ENCODE measurements at regions of chr20 and their contacts with region 1.

Region 1: DNA sequence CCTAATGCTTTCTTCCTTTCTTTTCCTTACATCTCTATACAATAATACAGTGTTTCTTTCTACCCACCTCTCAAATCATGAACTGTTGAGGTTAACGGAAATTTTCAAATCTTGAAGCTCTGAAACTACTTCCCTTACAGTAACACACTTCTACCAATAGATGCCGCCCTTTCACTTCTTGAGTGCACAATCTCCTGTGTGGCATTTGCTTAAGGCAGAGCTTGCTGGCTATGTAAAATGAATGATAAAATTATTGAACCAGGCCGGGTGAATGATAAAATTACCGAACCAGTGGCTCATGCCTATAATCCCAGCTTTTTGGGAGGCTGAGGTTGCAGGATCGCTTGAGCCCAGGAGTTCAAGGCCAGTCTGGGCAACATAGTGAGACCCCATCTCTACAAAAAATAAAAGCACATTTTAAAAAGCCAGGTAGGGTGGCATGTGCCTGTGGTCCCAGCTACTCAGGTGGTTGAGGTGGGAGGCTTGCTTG is 56.8 kb downstream of the KCNS1 start:
- DNase-seq: peak; percentile 40
- CTCF ChIP-seq: peak; percentile 61

Region 2: GRCh38 chr20:44552950-44553908 is 490.9 kb before region 1 on chr20:
- CTCF ChIA-PET with region 1: no interaction called
- POLR2A ChIA-PET with region 1: no interaction called
- DNase-seq: no peak
- CTCF ChIP-seq: no peak

Region 3: GRCh38 chr20:44856856-44857448 is 187.2 kb before region 1 on chr20:
- CTCF ChIA-PET with region 1: no interaction called
- POLR2A ChIA-PET with region 1: no interaction called
- DNase-seq: no peak
- CTCF ChIP-seq: no peak

Region 4: GRCh38 chr20:44997171-44998067 is 46.7 kb before region 1 on chr20:
- CTCF ChIA-PET with region 1: interaction called, 12 read pairs
- POLR2A ChIA-PET with region 1: no interaction called
- DNase-seq: no peak
- CTCF ChIP-seq: no peak

Region 5: DNA sequence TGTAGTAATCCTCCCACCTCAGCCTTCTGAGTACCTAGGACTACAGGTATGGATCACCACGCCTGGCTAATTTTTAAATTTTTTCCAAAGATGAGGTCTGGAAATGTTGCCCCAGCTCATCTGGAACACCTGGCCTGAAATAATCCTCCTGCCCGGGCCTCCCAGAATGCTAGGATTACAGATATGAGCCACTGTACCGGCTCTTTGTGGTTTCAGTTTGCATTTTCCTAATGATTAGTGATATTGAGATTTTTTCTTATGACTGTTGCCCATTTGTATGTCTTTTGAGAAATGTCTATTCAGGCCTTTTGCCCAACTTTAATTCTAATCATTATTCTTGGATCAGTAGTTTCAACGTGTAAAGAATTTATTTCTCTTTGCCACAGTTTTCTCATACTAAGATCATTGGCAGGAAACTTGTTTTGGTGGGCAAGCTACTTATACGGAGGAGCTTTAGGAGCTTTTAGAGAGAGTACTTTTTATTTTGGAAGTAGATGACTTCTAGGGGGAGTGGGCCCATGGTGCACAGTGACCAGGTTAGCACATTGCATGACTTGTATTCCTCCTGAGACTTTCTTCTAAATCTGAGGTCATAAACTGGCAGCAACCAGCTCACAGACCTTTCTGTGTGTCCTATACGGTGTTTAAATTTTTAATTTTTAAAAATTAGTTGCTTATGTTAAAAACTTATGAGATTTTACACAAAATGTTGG is 15.5 kb before region 1 on chr20:
- CTCF ChIA-PET with region 1: interaction called, 20 read pairs
- POLR2A ChIA-PET with region 1: interaction called, 3 read pairs
- DNase-seq: no peak
- CTCF ChIP-seq: no peak

Region 6: GRCh38 chr20:45070932-45071632 is 27.0 kb after region 1 on chr20:
- CTCF ChIA-PET with region 1: interaction called, 12 read pairs
- POLR2A ChIA-PET with region 1: interaction called, 3 read pairs
- DNase-seq: no peak
- CTCF ChIP-seq: no peak

Region 7: GRCh38 chr20:45104786-45105185 is 60.7 kb after region 1 on chr20:
- CTCF ChIA-PET with region 1: interaction called, 38 read pairs
- POLR2A ChIA-PET with region 1: no interaction called
- DNase-seq: no peak
- CTCF ChIP-seq: no peak

Region 8: DNA sequence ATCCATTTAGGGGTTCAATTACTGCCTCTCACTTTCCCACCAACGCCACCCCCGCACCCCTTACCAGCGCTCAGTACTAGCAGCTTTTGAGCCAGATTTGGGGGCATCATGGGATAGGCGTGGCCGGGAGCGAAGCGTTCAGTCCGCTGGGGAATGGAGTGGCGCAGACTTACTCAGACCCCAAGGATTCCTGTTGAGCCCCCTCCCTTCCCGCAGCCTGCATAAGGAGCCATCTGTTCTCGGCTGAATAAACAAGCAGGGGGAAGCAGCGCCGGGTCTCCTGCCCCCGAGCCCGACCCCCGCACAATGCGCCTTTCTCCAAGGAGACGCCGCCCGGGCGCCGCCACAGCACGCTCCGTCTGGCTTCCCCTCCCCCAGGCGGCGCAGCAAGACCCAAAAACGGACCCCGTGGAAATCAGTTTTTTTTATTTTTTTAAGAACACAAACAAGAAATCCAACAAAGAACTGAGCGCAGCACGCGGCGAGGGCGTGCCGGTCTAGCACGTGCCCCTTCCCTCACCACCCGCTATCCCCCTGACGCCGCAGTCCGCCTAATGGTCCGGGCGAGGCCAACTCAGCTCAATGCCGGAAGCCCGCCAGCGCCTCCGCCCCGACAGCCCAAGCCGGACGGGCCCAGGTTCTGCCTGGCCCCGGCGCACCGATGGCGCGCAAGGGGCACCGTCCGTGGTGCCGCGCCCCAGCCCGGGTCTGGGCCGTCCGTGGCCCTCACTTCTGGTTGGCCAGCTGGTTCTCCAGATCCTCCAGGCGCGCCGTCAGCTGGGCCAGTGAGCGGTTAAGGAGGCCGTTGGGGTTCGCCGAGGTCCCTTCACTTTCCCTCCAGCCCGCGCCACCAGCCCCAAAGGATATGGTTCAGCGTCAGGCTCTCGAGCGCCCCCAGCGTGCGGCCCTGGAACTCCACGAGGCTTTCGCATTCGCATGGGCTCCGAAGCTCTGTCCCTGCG is 249.2 kb after region 1 on chr20:
- CTCF ChIA-PET with region 1: interaction called, 26 read pairs
- POLR2A ChIA-PET with region 1: no interaction called
- DNase-seq: peak; percentile 83
- CTCF ChIP-seq: peak; percentile 90

Region 9: DNA sequence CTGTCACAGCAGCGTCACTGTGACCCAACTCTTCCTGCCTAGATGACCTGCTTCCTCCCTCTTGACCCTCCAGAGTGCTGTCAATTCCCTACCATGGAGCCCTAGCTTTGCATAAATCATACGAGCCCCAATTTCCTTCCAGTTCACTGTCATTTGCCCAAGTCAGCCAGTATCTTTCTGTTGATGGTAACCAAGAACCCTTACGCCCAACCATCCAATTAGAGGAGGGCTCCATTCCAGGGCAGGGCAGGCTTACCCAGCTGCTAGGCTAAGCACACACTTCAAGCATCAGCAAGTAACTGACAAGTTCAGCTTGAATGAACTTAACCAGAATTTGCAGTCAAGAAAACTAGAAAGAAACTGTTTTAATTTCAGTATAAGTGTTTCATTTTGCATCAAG is 721.9 kb after region 1 on chr20:
- CTCF ChIA-PET with region 1: no interaction called
- POLR2A ChIA-PET with region 1: no interaction called
- DNase-seq: no peak
- CTCF ChIP-seq: no peak